ENCODE measurements at regions of chr14 and their contacts with region 1.

Region 1: DNA sequence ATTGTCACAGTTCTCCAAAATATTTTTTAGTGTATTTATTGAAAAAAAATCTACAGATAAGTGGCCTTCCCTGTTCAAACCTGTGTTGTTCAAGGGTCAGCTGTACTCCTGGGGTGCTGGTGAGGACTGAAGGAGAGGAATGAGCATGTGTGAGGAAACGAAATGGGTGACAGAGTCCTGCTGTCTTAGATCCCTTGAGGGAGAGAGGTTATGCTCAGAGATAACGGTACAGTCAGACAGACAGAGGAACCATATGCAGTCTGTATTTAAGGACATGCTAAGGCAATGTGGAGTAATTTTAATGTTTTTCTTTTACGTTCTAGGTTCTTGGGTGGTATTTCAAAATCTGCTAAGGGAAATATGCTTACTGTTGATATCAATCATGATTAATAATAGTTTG is 352.9 kb upstream of the RGS6 start:
- DNase-seq: no peak
- H3K4me3 ChIP-seq: no peak overlapping the region
- H3K27ac ChIP-seq: no peak overlapping the region
- H3K4me1 ChIP-seq: peaks cover 9% of the 10 kb centered on the region
- CTCF ChIP-seq: no peak

Region 2: GRCh38 chr14:71591929-71592328 is 12.6 kb after region 1 on chr14:
- CTCF ChIA-PET with region 1: interaction called, 3 read pairs
- POLR2A ChIA-PET with region 1: interaction called, 11 read pairs
- intact Hi-C with region 1: no loop called
- DNase-seq: peak; percentile 59
- H3K4me3 ChIP-seq: no peak overlapping the region
- H3K27ac ChIP-seq: peak overlapping the region; percentile 41
- H3K4me1 ChIP-seq: peaks cover 17% of the 10 kb centered on the region
- CTCF ChIP-seq: no peak

Measured in OCI-LY7 (cell line).